Transverse colon (tissue), 4 donors: ENCODE measurements at regions of chr2 and their contacts with region 1.

Region 1: DNA sequence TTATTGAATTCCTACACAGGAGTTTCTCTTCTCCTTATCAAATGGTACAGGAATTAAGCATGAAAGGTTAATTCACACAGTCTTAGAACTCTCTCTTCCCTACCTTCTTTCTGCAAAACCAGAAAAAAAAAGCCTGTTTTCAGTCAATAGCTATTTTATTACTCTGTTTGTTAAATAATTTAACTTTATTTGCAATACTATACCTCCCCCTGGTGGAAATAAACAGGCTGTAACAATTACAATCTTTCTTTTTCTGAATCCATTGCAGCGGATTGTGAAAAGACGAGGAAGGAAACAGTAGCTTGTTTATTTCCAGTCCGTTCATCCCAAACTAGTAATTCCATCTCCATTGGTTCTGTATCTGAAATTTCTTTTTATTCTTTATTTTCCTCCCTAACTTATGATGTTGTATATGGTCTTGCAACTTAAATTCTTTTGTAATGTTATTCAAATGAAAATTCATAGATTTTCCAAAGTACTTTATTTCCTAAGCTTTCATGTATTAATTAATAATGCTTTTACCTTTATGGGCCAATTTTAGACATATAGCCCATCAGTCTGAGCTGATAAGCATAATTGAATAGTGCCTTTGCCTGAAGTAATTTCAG is 165.2 kb downstream of the SH3BP4 start:
- DNase-seq: no peak
- H3K4me3 ChIP-seq: no peak overlapping the region
- H3K27ac ChIP-seq: no peak overlapping the region
- H3K4me1 ChIP-seq: peaks cover 0 to 4% (median 0%) of the 10 kb centered on the region in 4 donors
- H3K27me3 ChIP-seq: peaks cover 4% of the 10 kb centered on the region
- CTCF ChIP-seq: peak; percentile 52 to 76 (median 65)
- EP300 ChIP-seq: no peak
- POLR2A ChIP-seq: no peak

Region 2: DNA sequence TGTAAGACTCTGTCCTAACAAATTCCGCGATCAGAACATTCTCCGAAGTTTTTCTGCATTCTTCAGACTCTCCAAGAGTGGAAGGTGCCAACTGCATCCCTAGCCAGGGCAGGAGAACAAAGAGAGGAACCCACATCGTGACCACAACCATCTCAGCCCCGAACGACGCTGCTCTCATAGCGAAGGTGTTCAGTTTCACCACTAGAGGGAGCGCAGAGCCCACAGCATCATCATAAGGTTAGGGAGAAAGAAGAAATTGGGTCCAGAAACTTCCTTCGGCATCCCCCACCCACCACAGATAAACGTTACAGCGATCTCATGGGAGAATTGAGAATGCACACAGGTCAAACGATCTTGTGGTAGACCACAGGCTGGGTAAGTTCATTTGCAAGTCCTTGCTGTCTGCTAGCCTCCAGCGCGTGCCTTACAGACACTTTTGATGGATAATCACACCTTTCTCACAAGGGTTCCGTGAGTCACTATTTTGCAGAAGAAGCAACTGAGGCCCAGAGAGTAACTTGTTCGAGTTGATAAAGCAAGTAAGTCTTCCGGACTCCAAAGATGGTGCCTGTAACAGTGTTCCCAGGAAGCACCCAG is 566.4 kb before region 1 on chr2:
- in situ Hi-C with region 1: loop called in 2 of 4 experiments (anchors 5 to 10 kb)
- intact Hi-C with region 1: loop called (anchors 5 kb)
- DNase-seq: peak; percentile 56
- H3K4me3 ChIP-seq: no peak overlapping the region
- H3K27ac ChIP-seq: no peak overlapping the region
- H3K4me1 ChIP-seq: no peaks in the 10 kb centered on the region
- H3K27me3 ChIP-seq: peaks cover 5% of the 10 kb centered on the region
- CTCF ChIP-seq: peak; percentile 87 to 95 (median 90)
- EP300 ChIP-seq: no peak
- POLR2A ChIP-seq: no peak